Colonic mucosa (tissue), 4 donors: ENCODE measurements at regions of chr2 and their contacts with region 1.

Region 1: DNA sequence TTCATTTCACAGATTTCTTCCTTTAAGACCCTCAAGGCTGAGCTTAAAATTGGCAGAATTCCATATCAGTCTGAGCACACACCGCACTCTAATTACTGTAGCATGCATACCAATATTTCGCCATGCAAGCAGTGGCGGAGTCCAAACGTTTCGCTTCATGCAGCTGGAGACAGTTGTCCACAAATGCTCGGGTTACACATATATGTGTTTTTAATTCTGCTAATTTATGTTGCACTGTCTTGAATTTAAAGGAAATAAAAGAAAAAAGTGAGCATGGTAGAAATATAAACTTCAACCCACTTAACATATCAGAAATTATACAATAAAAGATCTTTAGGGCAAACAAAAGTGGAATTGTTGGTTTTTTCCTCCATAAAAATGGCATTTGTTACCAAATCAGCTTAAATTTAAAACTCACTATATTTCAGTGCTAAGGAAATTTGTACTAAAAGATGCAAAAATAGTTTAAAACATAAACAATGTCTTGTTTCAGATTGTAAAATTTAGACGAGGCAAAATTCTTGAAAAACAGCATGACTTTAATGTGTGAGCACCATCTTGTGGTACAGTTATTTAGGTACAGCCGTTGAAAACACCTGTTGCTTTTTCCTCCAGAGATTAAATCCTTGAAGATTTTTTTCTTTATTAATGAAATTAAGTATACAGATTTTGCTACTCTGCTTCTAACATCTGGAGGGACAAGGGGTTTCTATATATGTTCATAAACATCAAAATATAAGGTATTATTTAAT is 24.1 kb upstream of the KANSL1L start:
- DNase-seq: no peak
- H3K4me3 ChIP-seq: no peak overlapping the region
- H3K27ac ChIP-seq: no peak overlapping the region
- H3K4me1 ChIP-seq: no peaks in the 10 kb centered on the region
- H3K27me3 ChIP-seq: no peaks in the 10 kb centered on the region
- CTCF ChIP-seq: peak; percentile 48

Region 2: DNA sequence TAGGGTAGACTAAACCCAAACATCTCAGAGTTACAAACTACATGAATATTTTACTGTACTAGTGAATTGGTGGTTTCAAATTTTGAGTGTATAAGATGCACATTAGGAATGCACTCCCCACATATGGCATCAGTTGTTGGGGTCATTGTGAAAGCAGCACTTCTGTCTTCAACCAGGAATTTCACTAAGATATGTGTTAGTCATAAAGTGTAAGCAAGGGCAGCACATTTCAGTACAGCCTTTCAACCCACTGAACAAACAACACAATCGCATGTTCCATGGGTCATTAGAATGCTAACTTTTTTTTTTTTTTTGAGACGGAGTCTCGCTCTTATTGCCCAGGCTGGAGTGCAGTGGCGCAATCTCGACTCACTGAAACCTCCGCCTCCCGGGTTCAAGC is 935.5 kb before region 1 on chr2:
- intact Hi-C with region 1: no loop called
- DNase-seq: no peak
- H3K4me3 ChIP-seq: no peak overlapping the region
- H3K27ac ChIP-seq: no peak overlapping the region
- H3K4me1 ChIP-seq: no peaks in the 10 kb centered on the region
- H3K27me3 ChIP-seq: no peaks in the 10 kb centered on the region
- CTCF ChIP-seq: no peak

Region 3: DNA sequence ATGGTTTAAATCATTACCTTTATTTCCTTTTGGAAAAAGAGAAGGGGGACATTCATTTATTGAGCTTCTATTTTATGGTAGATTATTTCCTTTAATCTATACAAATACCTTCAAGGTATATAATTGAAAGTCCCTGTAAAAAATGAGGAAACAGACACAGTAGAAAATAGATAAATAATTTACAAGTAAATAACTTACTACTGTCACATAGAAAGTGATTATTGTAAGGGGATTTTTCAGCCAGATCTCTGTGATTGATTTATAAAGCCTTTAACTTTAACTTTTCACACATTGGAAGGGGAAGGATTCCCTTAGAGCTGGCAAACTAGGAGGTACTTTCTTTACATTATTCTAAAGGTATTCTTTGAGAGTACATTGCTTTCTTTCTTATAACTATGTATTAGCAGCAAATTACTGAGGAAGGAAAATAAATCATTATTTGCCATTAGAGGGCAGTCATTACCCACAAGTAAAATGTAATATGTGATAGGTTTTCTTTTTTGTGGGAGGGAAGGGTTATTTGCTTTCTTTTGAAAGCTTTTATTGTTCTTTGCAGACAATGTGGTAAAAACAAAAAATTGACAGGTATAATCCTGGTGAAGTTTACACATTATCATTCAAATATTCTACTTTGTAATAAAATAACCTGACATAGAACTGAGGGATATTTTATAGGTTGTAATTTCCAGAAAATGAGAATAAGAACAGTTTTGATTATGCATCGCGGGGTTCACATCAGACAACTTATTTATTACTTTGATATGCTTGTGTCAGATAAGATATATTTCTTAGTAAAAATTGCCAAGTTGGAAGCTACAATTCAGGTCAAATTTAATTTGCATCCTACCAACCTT is 217.7 kb before region 1 on chr2:
- intact Hi-C with region 1: loop called (anchors 2 kb)
- DNase-seq: no peak
- H3K4me3 ChIP-seq: no peak overlapping the region
- H3K27ac ChIP-seq: no peak overlapping the region
- H3K4me1 ChIP-seq: no peaks in the 10 kb centered on the region
- H3K27me3 ChIP-seq: no peaks in the 10 kb centered on the region
- CTCF ChIP-seq: peak; percentile 29

Region 4: GRCh38 chr2:210072922-210073509 is 122.3 kb before region 1 on chr2:
- intact Hi-C with region 1: loop called (anchors 5 kb)
- DNase-seq: no peak
- H3K4me3 ChIP-seq: no peak overlapping the region
- H3K27ac ChIP-seq: no peak overlapping the region
- H3K4me1 ChIP-seq: no peaks in the 10 kb centered on the region
- H3K27me3 ChIP-seq: no peaks in the 10 kb centered on the region
- CTCF ChIP-seq: peak; percentile 52